ENCODE measurements at regions of chr15 and their contacts with region 1.

Region 1: GRCh38 chr15:65184868-65185738 is at the start of gene CLPX:
- DNase-seq: peak; percentile 87 to 88
- H3K4me3 ChIP-seq: peak within 1 kb of the TSS; percentile 60 to 95 (median 92)
- H3K27ac ChIP-seq: peak within 1 kb of the TSS; percentile 80; the same call in 1 of the 2 replicates
- H3K4me1 ChIP-seq: peaks cover 0 to 2% (median 0%) of the 10 kb centered on the region in 4 experiments; a peak in 2 of 7 replicates
- H3K27me3 ChIP-seq: no peaks in the 10 kb centered on the region
- CTCF ChIP-seq: no peak
- EP300 ChIP-seq: no peak
- POLR2A ChIP-seq: peak; percentile 51 to 86
- RAD21 ChIP-seq: no peak
- total RNA-seq, gene CLPX: 53.6 and 56.4 TPM in 2 replicates

Region 2: GRCh38 chr15:64905119-64905831 is 279.8 kb before region 1 on chr15:
- CTCF ChIA-PET with region 1: no interaction called
- POLR2A ChIA-PET with region 1: no interaction called
- DNase-seq: peak; percentile 93 to 96
- H3K4me3 ChIP-seq: peak overlapping the region; percentile 22 to 59 (median 42); a peak in 7 of 8 replicates
- H3K27ac ChIP-seq: peak overlapping the region; percentile 48; the same call in 1 of the 2 replicates
- H3K4me1 ChIP-seq: peaks cover 0 to 8% (median 3%) of the 10 kb centered on the region in 4 experiments; a peak in 5 of 7 replicates
- H3K27me3 ChIP-seq: no peaks in the 10 kb centered on the region
- CTCF ChIP-seq: peak; percentile 81 to 88 (median 85)
- EP300 ChIP-seq: no peak
- POLR2A ChIP-seq: no peak; a peak in 1 of 3 replicates
- RAD21 ChIP-seq: peak; percentile 83 to 89

Region 3: GRCh38 chr15:65264863-65265430 is 79.8 kb after region 1 on chr15:
- CTCF ChIA-PET with region 1: interaction called, 123 read pairs
- POLR2A ChIA-PET with region 1: no interaction called
- DNase-seq: no peak
- H3K4me3 ChIP-seq: no peak overlapping the region
- H3K27ac ChIP-seq: no peak overlapping the region
- H3K4me1 ChIP-seq: peaks cover 3 to 10% (median 4%) of the 10 kb centered on the region in 4 experiments; a peak in 5 of 7 replicates
- H3K27me3 ChIP-seq: no peaks in the 10 kb centered on the region
- CTCF ChIP-seq: no peak
- EP300 ChIP-seq: no peak
- POLR2A ChIP-seq: no peak
- RAD21 ChIP-seq: no peak

Measured in H1 (cell line).